ENCODE measurements at regions of chr19 and their contacts with region 1.

Region 1: DNA sequence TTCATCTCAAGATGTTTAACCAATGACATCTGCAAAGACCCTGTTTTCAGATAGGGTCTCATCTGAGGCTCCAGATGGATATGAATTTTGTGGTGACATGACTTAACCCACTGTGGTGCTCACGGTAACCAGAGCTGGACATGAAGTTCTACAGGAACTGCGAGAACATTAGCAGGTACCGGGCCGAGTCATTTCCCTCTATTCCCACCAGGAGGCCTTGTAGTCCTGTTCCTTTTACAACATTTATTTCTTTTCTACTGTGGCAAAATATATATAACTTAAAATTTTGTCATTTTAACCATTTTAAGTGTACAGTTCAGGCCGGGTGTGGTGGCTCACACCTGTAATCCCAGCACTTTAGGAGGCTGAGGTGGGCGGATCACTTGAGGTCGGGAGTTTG is 7.6 kb upstream of the TSPAN16 start:
- DNase-seq: peak; percentile 45 to 61 (median 51)
- H3K4me3 ChIP-seq: no peak overlapping the region
- H3K27ac ChIP-seq: no peak overlapping the region
- H3K4me1 ChIP-seq: peaks cover 0 to 5% (median 3%) of the 10 kb centered on the region in 4 experiments
- H3K27me3 ChIP-seq: peaks cover 0 to 14% (median 3%) of the 10 kb centered on the region in 5 experiments

Region 2: GRCh38 chr19:11242864-11243797 is 45.2 kb before region 1 on chr19:
- CTCF ChIA-PET with region 1: interaction called, 27 read pairs
- POLR2A ChIA-PET with region 1: no interaction called
- DNase-seq: peak; percentile 66 to 78 (median 75)
- H3K4me3 ChIP-seq: peak overlapping the region in 2 of 7 experiments; percentile 36 to 45
- H3K27ac ChIP-seq: no peak overlapping the region
- H3K4me1 ChIP-seq: peaks cover 0 to 9% (median 3%) of the 10 kb centered on the region in 4 experiments
- H3K27me3 ChIP-seq: peaks cover 0 to 4% (median 0%) of the 10 kb centered on the region in 5 experiments

Region 3: GRCh38 chr19:11335449-11336146 is 47.3 kb after region 1 on chr19:
- CTCF ChIA-PET with region 1: no interaction called
- POLR2A ChIA-PET with region 1: no interaction called
- DNase-seq: no peak
- H3K4me3 ChIP-seq: no peak overlapping the region
- H3K27ac ChIP-seq: no peak overlapping the region
- H3K4me1 ChIP-seq: peaks cover 7 to 35% (median 31%) of the 10 kb centered on the region in 4 experiments
- H3K27me3 ChIP-seq: no peaks in the 10 kb centered on the region